HEK293 (cell line): ENCODE measurements at regions of chr10 and their contacts with region 1.

Region 1: DNA sequence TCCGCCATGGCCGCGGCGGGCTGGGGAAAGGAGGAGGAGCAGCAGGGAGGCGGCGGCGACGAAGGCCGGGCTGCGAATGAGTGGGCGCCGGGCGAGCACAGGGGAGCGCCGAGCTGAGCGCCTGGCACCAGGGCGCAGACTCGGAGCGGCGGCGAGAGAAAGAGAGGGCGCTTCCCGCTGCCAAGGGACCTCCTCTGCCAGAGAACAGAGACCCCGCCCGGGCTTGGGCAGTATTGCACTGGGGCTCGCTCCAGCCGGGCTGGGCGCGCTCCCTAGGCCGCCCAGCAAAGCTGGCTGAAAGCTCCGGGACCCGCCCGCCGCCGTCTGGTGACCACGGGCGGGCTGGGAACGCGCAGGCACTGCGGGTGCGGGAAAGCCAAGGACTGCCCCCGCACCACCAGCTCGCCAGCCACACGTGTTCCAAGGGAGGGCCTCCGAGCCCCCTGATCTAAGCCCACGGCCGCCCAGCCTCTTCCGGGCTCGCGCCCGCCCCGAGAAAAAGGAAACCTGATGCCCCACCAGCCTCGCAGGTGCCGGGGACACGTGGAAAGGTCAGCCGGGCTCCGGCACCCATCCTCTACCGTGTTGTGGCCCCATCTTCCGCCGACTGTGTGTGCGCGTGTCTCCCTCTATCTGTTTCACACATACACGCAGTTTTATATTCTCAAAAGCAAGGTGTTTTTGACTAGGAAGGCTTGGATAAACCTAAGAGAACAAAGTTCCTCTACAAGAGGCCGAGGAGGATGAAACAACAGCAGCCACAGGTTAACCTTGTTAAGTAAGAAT is at the start of gene CCDC6:
- H3K4me3 ChIP-seq: peak within 1 kb of the TSS; percentile 85
- H3K27ac ChIP-seq: peak within 1 kb of the TSS; percentile 95
- H3K4me1 ChIP-seq: peaks cover 10% of the 10 kb centered on the region
- CTCF ChIP-seq: peak; percentile 94

Region 2: DNA sequence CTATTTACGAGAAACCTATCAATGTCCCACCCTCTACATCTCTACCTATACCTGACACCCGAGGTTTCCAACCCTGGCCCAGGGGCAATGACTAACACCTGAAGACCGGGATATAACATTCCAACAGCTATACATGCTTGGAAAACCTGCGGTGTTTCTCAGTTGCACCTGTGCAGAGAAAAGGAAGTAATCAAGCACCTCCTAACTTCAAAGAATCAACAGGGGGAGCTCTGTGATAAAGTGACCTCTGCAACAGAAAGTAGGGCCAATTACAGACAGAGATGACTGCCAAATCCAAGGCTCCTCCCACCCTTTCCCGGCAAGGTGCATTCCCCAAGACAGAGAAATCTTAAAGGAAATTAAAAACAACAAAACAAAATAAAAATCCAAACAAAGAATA is 41.5 kb before region 1 on chr10:
- CTCF ChIA-PET with region 1: interaction called, 13 read pairs
- POLR2A ChIA-PET with region 1: interaction called, 10 read pairs
- H3K4me3 ChIP-seq: no peak overlapping the region
- H3K27ac ChIP-seq: no peak overlapping the region
- H3K4me1 ChIP-seq: peaks cover 12% of the 10 kb centered on the region; the same call in 1 of the 2 replicates
- CTCF ChIP-seq: no peak

Region 3: GRCh38 chr10:59872892-59873463 is 33.6 kb before region 1 on chr10:
- CTCF ChIA-PET with region 1: interaction called, 3 read pairs
- POLR2A ChIA-PET with region 1: interaction called, 16 read pairs
- H3K4me3 ChIP-seq: no peak overlapping the region
- H3K27ac ChIP-seq: no peak overlapping the region
- H3K4me1 ChIP-seq: peaks cover 10% of the 10 kb centered on the region
- CTCF ChIP-seq: no peak

Region 4: GRCh38 chr10:59895629-59896116 is 10.9 kb before region 1 on chr10:
- CTCF ChIA-PET with region 1: interaction called, 6 read pairs
- POLR2A ChIA-PET with region 1: interaction called, 11 read pairs
- H3K4me3 ChIP-seq: no peak overlapping the region
- H3K27ac ChIP-seq: no peak overlapping the region
- H3K4me1 ChIP-seq: peaks cover 5% of the 10 kb centered on the region; the same call in 1 of the 2 replicates
- CTCF ChIP-seq: no peak